ENCODE measurements at regions of chr3 and their contacts with region 1.

Region 1: GRCh38 chr3:29280404-29281093 is at the start of gene RBMS3:
- DNase-seq: peak; percentile 58
- H3K4me3 ChIP-seq: peak within 1 kb of the TSS; percentile 72 to 83
- H3K27ac ChIP-seq: peak within 1 kb of the TSS; percentile 95 to 96
- H3K4me1 ChIP-seq: peaks cover 9 to 16% of the 10 kb centered on the region in 2 experiments; a peak in 3 of 4 replicates
- H3K27me3 ChIP-seq: no peaks in the 10 kb centered on the region
- CTCF ChIP-seq: peak; percentile 62
- EP300 ChIP-seq: peak; percentile 43 to 54; a peak in 3 of 4 replicates
- RAD21 ChIP-seq: peak; percentile 74
- polyA plus RNA-seq, gene RBMS3: 8.2 and 9.9 TPM in 2 replicates

Region 2: GRCh38 chr3:29144807-29145206 is 135.7 kb before region 1 on chr3:
- CTCF ChIA-PET with region 1: interaction called, 35 read pairs
- POLR2A ChIA-PET with region 1: interaction called, 6 read pairs
- DNase-seq: peak; percentile 55
- H3K4me3 ChIP-seq: peak overlapping the region in 1 of 2 experiments; percentile 34; a peak in 1 of 4 replicates
- H3K27ac ChIP-seq: peak overlapping the region; percentile 14 to 98; a peak in 3 of 4 replicates
- H3K4me1 ChIP-seq: peaks cover 23 to 25% of the 10 kb centered on the region in 2 experiments
- H3K27me3 ChIP-seq: no peaks in the 10 kb centered on the region
- CTCF ChIP-seq: peak; percentile 58
- EP300 ChIP-seq: peak in 1 of 2 experiments; percentile 93; a peak in 3 of 4 replicates
- RAD21 ChIP-seq: peak; percentile 94

Region 3: DNA sequence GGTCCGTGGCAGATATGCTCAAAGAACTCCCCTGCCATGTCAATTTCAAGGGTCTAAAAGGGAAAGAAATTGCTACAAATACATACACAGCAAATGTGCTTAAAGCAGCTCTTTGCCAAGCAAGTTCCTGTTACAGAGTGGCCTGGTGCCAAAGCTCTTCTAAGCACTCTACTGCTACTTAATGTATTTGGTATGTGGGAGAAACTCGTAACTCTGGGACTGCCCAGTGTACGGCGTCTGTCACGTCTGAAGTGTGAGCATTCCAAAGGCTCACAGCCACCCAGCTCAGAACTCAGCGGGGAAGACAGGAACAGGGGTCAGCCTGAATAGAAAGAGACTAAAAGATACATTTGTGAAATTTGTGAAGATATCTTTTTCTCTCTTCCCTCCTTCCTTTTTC is 54.9 kb after region 1 on chr3:
- CTCF ChIA-PET with region 1: interaction called, 7 read pairs
- POLR2A ChIA-PET with region 1: interaction called, 15 read pairs
- DNase-seq: peak; percentile 10
- H3K4me3 ChIP-seq: peak overlapping the region; percentile 34 to 54
- H3K27ac ChIP-seq: peak overlapping the region; percentile 96 to 100
- H3K4me1 ChIP-seq: peaks cover 60 to 88% of the 10 kb centered on the region in 2 experiments
- H3K27me3 ChIP-seq: no peaks in the 10 kb centered on the region
- CTCF ChIP-seq: no peak
- EP300 ChIP-seq: peak; percentile 73 to 79
- RAD21 ChIP-seq: peak; percentile 35; the same call in 1 of the 2 replicates

Region 4: GRCh38 chr3:29642393-29643033 is 362.0 kb after region 1 on chr3:
- CTCF ChIA-PET with region 1: interaction called, 3 read pairs
- POLR2A ChIA-PET with region 1: interaction called, 13 read pairs
- DNase-seq: peak; percentile 17
- H3K4me3 ChIP-seq: peak overlapping the region; percentile 41 to 42
- H3K27ac ChIP-seq: peak overlapping the region; percentile 92 to 100
- H3K4me1 ChIP-seq: peaks cover 17 to 54% of the 10 kb centered on the region in 2 experiments; a peak in 3 of 4 replicates
- H3K27me3 ChIP-seq: no peaks in the 10 kb centered on the region
- CTCF ChIP-seq: no peak
- EP300 ChIP-seq: no peak
- RAD21 ChIP-seq: peak; percentile 42

Measured in SK-N-SH (cell line).